ENCODE measurements at regions of chr20 and their contacts with region 1.

Region 1: DNA sequence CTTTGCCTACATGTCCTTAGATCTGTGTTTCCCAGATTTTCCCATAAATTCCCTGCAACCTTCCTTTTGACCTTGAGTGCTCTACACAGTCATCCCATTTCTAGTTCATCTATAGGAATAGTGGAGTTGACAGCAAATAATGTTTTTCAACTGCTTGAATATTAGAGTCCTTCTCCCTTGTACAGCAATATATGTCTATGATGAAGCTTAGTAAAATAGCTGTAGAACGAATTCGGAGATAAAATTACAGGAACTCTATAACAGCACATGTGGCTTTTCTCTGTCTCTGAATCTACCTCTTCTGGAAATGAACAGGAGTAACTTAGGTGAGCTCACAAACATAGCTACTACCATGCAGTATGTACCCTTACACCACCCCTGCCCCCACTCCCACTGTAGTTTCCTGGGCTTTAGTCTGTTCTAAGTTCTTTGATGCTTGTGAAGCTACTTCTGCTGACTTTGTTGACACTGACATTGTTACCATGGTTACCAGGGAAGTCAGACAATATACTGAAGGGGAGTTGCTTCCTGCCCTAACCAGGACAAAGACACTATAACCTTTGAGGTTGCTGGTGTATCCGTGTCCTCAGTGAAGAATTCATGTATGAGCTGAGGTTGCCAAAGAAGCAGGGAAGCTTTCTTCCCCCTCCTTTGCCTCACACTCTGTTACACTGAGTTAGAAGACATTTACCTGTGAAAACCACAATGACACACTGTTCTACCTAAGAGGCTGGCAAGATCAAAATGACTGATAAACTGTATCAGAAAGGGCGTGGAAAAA is 35.8 kb upstream of the SHLD1 start:
- DNase-seq: no peak
- H3K4me3 Mint-ChIP-seq: no peak overlapping the region
- H3K27ac Mint-ChIP-seq: peak overlapping the region; percentile 69
- H3K4me1 Mint-ChIP-seq: peaks cover 17% of the 10 kb centered on the region
- H3K27me3 Mint-ChIP-seq: peaks cover 12% of the 10 kb centered on the region
- CTCF ChIP-seq: no peak

Region 2: GRCh38 chr20:5522422-5522821 is 192.0 kb before region 1 on chr20:
- CTCF ChIA-PET with region 1: no interaction called
- POLR2A ChIA-PET with region 1: no interaction called
- intact Hi-C with region 1: no loop called
- DNase-seq: no peak
- H3K4me3 Mint-ChIP-seq: no peak overlapping the region
- H3K27ac Mint-ChIP-seq: no peak overlapping the region
- H3K4me1 Mint-ChIP-seq: no peaks in the 10 kb centered on the region
- H3K27me3 Mint-ChIP-seq: peaks cover 12% of the 10 kb centered on the region
- CTCF ChIP-seq: no peak

Region 3: GRCh38 chr20:5703681-5704101 is 10.8 kb before region 1 on chr20:
- CTCF ChIA-PET with region 1: interaction called, 3 read pairs
- POLR2A ChIA-PET with region 1: interaction called, 14 read pairs
- intact Hi-C with region 1: no loop called
- DNase-seq: no peak
- H3K4me3 Mint-ChIP-seq: no peak overlapping the region
- H3K27ac Mint-ChIP-seq: no peak overlapping the region
- H3K4me1 Mint-ChIP-seq: no peaks in the 10 kb centered on the region
- H3K27me3 Mint-ChIP-seq: no peaks in the 10 kb centered on the region
- CTCF ChIP-seq: no peak